Naive thymus-derived CD4-positive, alpha-beta T cell (primary cell): ENCODE measurements at regions of chr11 and their contacts with region 1.

Region 1: GRCh38 chr11:35305670-35306382 is 113.5 kb downstream of the SLC1A2 start:
- DNase-seq: peak in 7 of 9 donors; percentile 20 to 57 (median 53)
- ATAC-seq: peak; percentile 55
- H3K4me3 ChIP-seq: no peak overlapping the region
- H3K4me3 Mint-ChIP-seq: peak overlapping the region; percentile 6 to 84 (median 77)
- H3K27ac ChIP-seq: peak overlapping the region; percentile 16
- H3K27ac Mint-ChIP-seq: peak overlapping the region; percentile 19 to 96 (median 86)
- H3K4me1 ChIP-seq: peaks cover 0 to 14% of the 10 kb centered on the region in 2 donors
- H3K4me1 Mint-ChIP-seq: peaks cover 16 to 42% (median 31%) of the 10 kb centered on the region in 7 donors
- H3K27me3 ChIP-seq: no peaks in the 10 kb centered on the region
- H3K27me3 Mint-ChIP-seq: peaks cover 0 to 14% (median 0%) of the 10 kb centered on the region in 5 donors

Region 2: DNA sequence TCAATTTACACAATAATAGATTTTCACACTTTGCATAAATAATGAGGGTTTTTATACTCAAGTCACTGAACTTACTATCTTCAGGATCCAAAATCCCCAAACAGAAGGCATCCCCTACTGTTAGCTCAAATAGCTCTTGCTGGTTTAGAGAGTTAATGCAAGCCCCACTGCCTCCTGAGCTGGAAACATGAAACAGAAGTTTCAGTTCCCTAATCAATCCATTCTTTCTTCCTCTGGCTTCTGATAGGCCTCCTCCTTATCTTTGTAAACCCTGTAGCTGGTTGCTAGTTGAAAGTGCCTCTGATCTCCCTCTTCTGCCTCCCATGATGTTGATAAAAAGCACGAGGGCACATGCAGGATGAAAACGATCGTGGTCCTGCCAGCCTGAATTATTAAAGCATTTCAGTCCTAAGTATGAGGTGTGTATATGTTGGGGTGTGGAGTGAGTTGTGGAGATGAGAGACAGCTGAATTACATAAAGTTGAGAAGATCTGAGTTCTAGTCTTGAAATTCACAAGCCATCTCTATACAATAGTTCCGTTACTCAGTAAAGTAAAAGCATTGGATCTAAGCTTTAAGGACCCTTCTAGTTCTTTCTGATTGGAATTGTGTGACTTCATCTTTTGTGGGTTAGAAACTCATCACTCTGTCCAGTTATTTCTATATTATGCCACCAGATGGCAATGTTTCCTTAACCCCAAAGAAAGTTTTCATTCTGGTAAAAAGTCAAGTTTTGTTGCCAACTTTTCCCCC is 719.9 kb before region 1 on chr11:
- CTCF ChIA-PET with region 1: interaction called, 5 read pairs
- POLR2A ChIA-PET with region 1: no interaction called
- intact Hi-C with region 1: loop called in 1 of 2 experiments (anchors 5 kb)
- DNase-seq: peak in 6 of 9 donors; percentile 5 to 47 (median 40)
- ATAC-seq: peak; percentile 60
- H3K4me3 ChIP-seq: no peak overlapping the region
- H3K4me3 Mint-ChIP-seq: no peak overlapping the region
- H3K27ac ChIP-seq: no peak overlapping the region
- H3K27ac Mint-ChIP-seq: no peak overlapping the region
- H3K4me1 ChIP-seq: peaks cover 0 to 4% of the 10 kb centered on the region in 2 donors
- H3K4me1 Mint-ChIP-seq: peaks cover 0 to 5% (median 0%) of the 10 kb centered on the region in 7 donors
- H3K27me3 ChIP-seq: no peaks in the 10 kb centered on the region
- H3K27me3 Mint-ChIP-seq: peaks cover 0 to 33% (median 18%) of the 10 kb centered on the region in 5 donors

Region 3: DNA sequence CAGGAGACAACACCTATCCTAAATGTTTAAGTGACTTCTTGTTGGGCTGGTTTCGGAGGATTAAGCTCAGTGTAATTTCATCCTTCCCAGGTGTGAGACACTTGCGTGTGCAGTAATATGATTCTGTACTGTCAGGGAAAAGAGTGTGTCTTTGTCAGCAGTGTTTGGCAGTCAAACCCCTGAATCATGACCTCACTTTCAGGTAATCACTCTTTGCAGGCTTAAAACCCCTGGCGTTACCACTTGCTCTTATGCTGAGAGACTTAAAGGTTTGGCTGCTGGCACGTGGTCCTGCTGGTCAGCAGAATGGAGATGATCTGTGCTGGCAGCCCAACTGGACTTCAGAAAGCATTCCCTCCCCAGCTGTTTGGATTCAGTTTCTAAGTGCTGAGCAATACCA is 445.8 kb before region 1 on chr11:
- CTCF ChIA-PET with region 1: no interaction called
- POLR2A ChIA-PET with region 1: no interaction called
- intact Hi-C with region 1: no loop called
- DNase-seq: no peak
- ATAC-seq: no peak
- H3K4me3 ChIP-seq: no peak overlapping the region
- H3K4me3 Mint-ChIP-seq: no peak overlapping the region
- H3K27ac ChIP-seq: no peak overlapping the region
- H3K27ac Mint-ChIP-seq: no peak overlapping the region
- H3K4me1 ChIP-seq: no peaks in the 10 kb centered on the region
- H3K4me1 Mint-ChIP-seq: no peaks in the 10 kb centered on the region
- H3K27me3 ChIP-seq: no peaks in the 10 kb centered on the region
- H3K27me3 Mint-ChIP-seq: peaks cover 0 to 7% (median 0%) of the 10 kb centered on the region in 5 donors

Region 4: DNA sequence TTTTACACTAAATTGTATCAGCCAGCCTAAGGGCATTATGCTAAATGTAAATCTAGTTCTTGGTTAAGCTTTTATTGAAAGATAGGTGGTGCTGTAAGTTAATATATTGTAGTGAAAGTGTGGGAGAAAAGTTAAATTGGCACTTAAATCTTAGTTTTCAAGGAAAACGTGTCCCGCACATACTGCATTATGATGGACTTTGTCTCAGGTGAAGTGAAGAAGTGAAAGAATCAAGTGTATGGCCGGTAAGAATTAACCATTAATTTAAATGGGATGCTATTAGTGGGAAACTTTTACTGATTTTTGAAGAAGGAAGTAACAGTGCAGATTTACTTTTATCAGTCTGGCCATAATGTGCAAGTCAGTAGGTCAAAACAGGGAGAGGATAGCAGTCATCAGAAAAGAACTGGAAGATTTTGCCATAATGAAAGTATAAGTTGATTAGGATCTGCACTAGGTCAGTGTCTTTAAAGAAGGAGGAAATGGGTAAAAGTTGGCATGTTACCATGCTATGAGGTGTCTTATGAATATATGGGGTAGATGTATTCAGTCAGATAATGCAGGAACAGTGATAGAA is 307.8 kb before region 1 on chr11:
- CTCF ChIA-PET with region 1: interaction called, 34 read pairs
- POLR2A ChIA-PET with region 1: interaction called, 5 read pairs
- intact Hi-C with region 1: loop called (anchors 1 to 2 kb)
- DNase-seq: peak in 6 of 9 donors; percentile 27 to 54 (median 44)
- ATAC-seq: peak; percentile 72
- H3K4me3 ChIP-seq: no peak overlapping the region
- H3K4me3 Mint-ChIP-seq: peak overlapping the region in 9 of 10 donors; percentile 6 to 81 (median 34)
- H3K27ac ChIP-seq: peak overlapping the region; percentile 8
- H3K27ac Mint-ChIP-seq: peak overlapping the region; percentile 15 to 90 (median 69)
- H3K4me1 ChIP-seq: peaks cover 15 to 19% of the 10 kb centered on the region in 2 donors
- H3K4me1 Mint-ChIP-seq: peaks cover 19 to 38% (median 35%) of the 10 kb centered on the region in 7 donors
- H3K27me3 ChIP-seq: no peaks in the 10 kb centered on the region
- H3K27me3 Mint-ChIP-seq: no peaks in the 10 kb centered on the region

Region 5: GRCh38 chr11:35126000-35126878 is 179.6 kb before region 1 on chr11:
- CTCF ChIA-PET with region 1: no interaction called
- POLR2A ChIA-PET with region 1: no interaction called
- intact Hi-C with region 1: no loop called
- DNase-seq: peak in 2 of 9 donors; percentile 27 to 62
- ATAC-seq: peak; percentile 59
- H3K4me3 ChIP-seq: peak overlapping the region; percentile 17
- H3K4me3 Mint-ChIP-seq: peak overlapping the region; percentile 42 to 69 (median 60)
- H3K27ac ChIP-seq: peak overlapping the region; percentile 12
- H3K27ac Mint-ChIP-seq: peak overlapping the region; percentile 44 to 92 (median 82)
- H3K4me1 ChIP-seq: peaks cover 33 to 49% of the 10 kb centered on the region in 2 donors
- H3K4me1 Mint-ChIP-seq: peaks cover 32 to 69% (median 64%) of the 10 kb centered on the region in 7 donors
- H3K27me3 ChIP-seq: no peaks in the 10 kb centered on the region
- H3K27me3 Mint-ChIP-seq: peaks cover 0 to 8% (median 0%) of the 10 kb centered on the region in 5 donors

Region 6: DNA sequence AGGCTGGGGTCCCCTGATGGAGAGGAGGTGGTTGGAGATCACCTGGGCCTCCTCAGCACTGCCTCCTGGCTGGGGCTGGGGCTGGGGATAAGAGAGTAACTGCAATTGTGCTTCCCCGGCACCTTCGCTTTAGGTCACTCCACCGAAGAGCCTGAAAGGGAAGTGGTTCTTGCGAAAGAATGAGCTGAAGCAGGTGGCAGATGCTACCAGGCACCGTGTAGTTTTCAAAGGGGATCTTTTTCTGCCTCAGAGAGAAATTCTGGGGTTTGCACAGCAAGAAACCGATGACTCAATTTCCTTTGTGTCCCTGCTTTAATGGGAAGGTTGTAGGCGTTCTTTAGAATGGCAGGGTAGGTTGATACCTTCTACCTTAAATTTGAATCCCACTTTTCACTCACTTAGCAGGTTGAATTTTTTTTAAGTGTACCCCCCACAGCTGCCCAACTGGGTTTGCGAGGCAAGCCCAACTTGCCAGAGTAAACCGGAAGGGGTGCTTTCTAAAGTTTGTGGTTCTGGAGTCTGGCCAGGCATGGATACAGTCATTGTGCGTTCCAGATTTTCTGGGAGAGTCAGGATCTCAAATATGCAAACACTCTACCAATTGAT is 161.6 kb before region 1 on chr11:
- CTCF ChIA-PET with region 1: interaction called, 8 read pairs
- POLR2A ChIA-PET with region 1: interaction called, 5 read pairs
- intact Hi-C with region 1: loop called in 1 of 2 experiments (anchors 1 kb)
- DNase-seq: peak in 8 of 9 donors; percentile 59 to 85 (median 74)
- ATAC-seq: peak; percentile 59
- H3K4me3 ChIP-seq: peak overlapping the region; percentile 97
- H3K4me3 Mint-ChIP-seq: peak overlapping the region; percentile 83 to 99 (median 94)
- H3K27ac ChIP-seq: peak overlapping the region; percentile 88
- H3K27ac Mint-ChIP-seq: peak overlapping the region; percentile 79 to 100 (median 92)
- H3K4me1 ChIP-seq: peaks cover 68 to 74% of the 10 kb centered on the region in 2 donors
- H3K4me1 Mint-ChIP-seq: peaks cover 62 to 83% (median 77%) of the 10 kb centered on the region in 7 donors
- H3K27me3 ChIP-seq: no peaks in the 10 kb centered on the region
- H3K27me3 Mint-ChIP-seq: no peaks in the 10 kb centered on the region

Region 7: DNA sequence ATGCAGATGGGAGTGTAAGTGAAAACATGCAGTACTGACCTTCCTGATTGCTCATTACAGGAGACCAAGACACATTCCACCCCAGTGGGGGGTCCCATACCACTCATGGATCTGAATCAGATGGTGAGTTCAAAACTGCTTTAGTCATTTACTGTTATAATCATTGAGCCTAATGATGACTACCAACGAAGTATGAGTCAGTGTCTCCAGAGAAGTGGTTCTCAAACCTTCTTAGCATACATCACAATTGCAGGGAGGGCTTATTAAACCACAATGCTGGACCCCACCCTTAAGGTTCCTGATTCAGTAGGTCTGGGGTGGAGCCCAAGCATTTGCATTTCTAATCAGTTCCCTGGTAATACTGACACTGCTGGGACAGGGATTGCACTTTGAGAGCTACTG is 91.0 kb before region 1 on chr11:
- CTCF ChIA-PET with region 1: interaction called, 5 read pairs
- POLR2A ChIA-PET with region 1: interaction called, 3 read pairs
- intact Hi-C with region 1: loop called in 1 of 2 experiments (anchors 2 kb)
- DNase-seq: no peak
- ATAC-seq: peak; percentile 71
- H3K4me3 ChIP-seq: no peak overlapping the region
- H3K4me3 Mint-ChIP-seq: peak overlapping the region in 7 of 10 donors; percentile 12 to 68 (median 44)
- H3K27ac ChIP-seq: peak overlapping the region; percentile 11
- H3K27ac Mint-ChIP-seq: peak overlapping the region; percentile 26 to 98 (median 92)
- H3K4me1 ChIP-seq: peaks cover 40 to 41% of the 10 kb centered on the region in 2 donors
- H3K4me1 Mint-ChIP-seq: peaks cover 41 to 97% (median 89%) of the 10 kb centered on the region in 7 donors
- H3K27me3 ChIP-seq: no peaks in the 10 kb centered on the region
- H3K27me3 Mint-ChIP-seq: no peaks in the 10 kb centered on the region

Region 8: DNA sequence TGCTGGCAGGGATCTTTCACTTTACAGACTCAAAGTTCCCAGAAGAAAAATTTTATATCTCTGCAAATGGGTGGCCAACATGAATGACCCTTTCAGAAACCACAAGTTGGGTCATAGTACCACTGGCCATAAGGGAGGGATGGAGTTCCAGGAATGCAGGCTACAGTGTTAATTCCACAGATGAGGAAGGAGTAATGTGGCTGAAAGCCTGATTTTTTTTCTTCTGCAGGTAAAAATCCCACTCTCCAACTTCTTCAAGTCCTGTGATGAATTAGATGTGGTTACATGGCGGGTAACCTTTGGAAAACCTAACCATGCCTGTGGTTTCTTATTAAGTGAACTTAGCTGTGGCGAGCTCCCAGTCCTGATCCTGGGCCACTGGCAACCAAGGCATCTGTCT is 10.3 kb after region 1 on chr11:
- CTCF ChIA-PET with region 1: interaction called, 11 read pairs
- POLR2A ChIA-PET with region 1: interaction called, 6 read pairs
- intact Hi-C with region 1: no loop called
- DNase-seq: no peak
- ATAC-seq: no peak
- H3K4me3 ChIP-seq: no peak overlapping the region
- H3K4me3 Mint-ChIP-seq: no peak overlapping the region
- H3K27ac ChIP-seq: no peak overlapping the region
- H3K27ac Mint-ChIP-seq: peak overlapping the region in 2 of 9 donors; percentile 7 to 62
- H3K4me1 ChIP-seq: peaks cover 0 to 13% of the 10 kb centered on the region in 2 donors
- H3K4me1 Mint-ChIP-seq: peaks cover 10 to 42% (median 29%) of the 10 kb centered on the region in 7 donors
- H3K27me3 ChIP-seq: no peaks in the 10 kb centered on the region
- H3K27me3 Mint-ChIP-seq: no peaks in the 10 kb centered on the region

Region 9: DNA sequence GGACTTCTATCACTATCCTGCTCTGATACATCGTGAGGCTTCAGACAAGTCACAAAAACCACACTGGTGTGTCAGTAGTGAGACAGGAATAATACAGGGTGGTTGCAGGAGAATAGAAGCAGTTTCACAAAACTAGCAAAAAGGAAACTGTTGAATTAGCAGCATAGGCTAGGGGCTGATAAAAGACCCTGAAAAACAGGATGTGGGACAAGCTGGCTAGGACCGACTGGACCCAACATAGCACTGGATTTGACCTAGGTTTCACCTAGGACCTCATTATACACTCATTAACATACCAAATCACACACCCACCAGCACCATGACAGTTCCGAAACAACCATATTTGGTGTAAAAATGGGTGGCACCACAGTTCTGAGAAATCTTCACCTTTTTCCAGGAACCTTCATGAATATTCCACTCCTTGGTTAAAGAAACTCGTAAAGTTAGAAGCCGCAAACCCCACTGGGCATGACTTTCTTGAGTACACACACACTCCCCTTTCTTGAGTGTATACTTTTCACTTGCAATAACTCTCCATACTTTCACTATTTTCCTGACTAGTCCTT is 37.3 kb after region 1 on chr11:
- CTCF ChIA-PET with region 1: interaction called, 5 read pairs
- POLR2A ChIA-PET with region 1: interaction called, 6 read pairs
- intact Hi-C with region 1: loop called (anchors 2 to 5 kb)
- DNase-seq: peak in 8 of 9 donors; percentile 19 to 69 (median 54)
- ATAC-seq: peak; percentile 62
- H3K4me3 ChIP-seq: no peak overlapping the region
- H3K4me3 Mint-ChIP-seq: peak overlapping the region; percentile 33 to 82 (median 66)
- H3K27ac ChIP-seq: peak overlapping the region; percentile 2
- H3K27ac Mint-ChIP-seq: peak overlapping the region; percentile 82 to 91 (median 85)
- H3K4me1 ChIP-seq: peaks cover 3 to 43% of the 10 kb centered on the region in 2 donors
- H3K4me1 Mint-ChIP-seq: peaks cover 29 to 80% (median 59%) of the 10 kb centered on the region in 7 donors
- H3K27me3 ChIP-seq: no peaks in the 10 kb centered on the region
- H3K27me3 Mint-ChIP-seq: peaks cover 0 to 2% (median 0%) of the 10 kb centered on the region in 5 donors